CD8-positive, alpha-beta T cell (primary cell): ENCODE measurements at regions of chr10 and their contacts with region 1.

Region 1: DNA sequence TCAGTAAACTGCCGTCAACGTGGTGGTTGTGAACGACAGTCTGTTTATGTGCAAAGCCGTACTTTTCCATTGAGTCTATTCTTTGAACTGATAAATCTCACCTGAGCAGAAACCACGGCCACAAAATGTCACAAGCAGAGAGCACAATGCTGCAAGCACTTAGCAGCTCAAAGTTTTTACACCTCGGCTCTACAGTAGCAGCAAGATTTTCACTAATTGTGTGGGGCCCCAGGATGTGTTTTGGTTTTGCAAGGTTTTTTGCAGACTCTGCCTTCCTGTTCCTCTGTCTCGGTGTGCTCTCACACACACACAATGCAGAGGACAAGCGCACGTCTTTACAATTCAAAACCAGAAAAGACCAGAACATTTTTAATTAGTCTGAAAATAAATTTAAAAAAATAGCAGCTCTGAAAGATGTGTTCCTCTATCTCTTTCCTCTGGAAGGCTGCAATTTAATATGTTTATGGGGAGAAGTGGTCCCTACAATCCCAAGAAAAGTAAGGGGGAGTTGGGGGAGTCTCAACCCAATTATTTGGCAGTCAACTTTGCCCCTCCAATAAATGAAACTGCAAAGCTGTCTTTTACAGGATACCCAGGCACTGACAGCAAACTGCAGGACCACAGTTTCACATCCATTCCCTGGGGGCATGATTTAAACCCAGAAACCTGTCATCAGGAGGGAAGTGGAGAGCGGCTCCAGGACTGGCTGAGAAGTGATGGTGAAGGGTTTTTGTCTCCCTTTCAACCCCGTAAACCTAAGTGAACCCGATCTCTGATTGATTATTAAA is 73.8 kb upstream of the SFMBT2 start:
- DNase-seq: peak; percentile 39 to 92 (median 66)
- ATAC-seq: peak; percentile 79
- H3K4me3 ChIP-seq: peak overlapping the region; percentile 16 to 40
- H3K4me3 Mint-ChIP-seq: peak overlapping the region; percentile 69
- H3K27ac ChIP-seq: peak overlapping the region; percentile 67 to 83
- H3K27ac Mint-ChIP-seq: peak overlapping the region; percentile 94
- H3K4me1 ChIP-seq: peaks cover 80% of the 10 kb centered on the region
- H3K4me1 Mint-ChIP-seq: peaks cover 89% of the 10 kb centered on the region
- H3K27me3 ChIP-seq: no peaks in the 10 kb centered on the region
- H3K27me3 Mint-ChIP-seq: no peaks in the 10 kb centered on the region
- CTCF ChIP-seq: no peak

Region 2: GRCh38 chr10:7362471-7362870 is 122.2 kb before region 1 on chr10:
- CTCF ChIA-PET with region 1: no interaction called
- POLR2A ChIA-PET with region 1: no interaction called
- intact Hi-C with region 1: no loop called
- DNase-seq: no peak
- ATAC-seq: no peak
- H3K4me3 ChIP-seq: no peak overlapping the region
- H3K4me3 Mint-ChIP-seq: no peak overlapping the region
- H3K27ac ChIP-seq: no peak overlapping the region
- H3K27ac Mint-ChIP-seq: no peak overlapping the region
- H3K4me1 ChIP-seq: no peaks in the 10 kb centered on the region
- H3K4me1 Mint-ChIP-seq: peaks cover 38% of the 10 kb centered on the region
- H3K27me3 ChIP-seq: no peaks in the 10 kb centered on the region
- H3K27me3 Mint-ChIP-seq: no peaks in the 10 kb centered on the region
- CTCF ChIP-seq: no peak

Region 3: GRCh38 chr10:7507887-7508726 is 23.5 kb after region 1 on chr10:
- CTCF ChIA-PET with region 1: no interaction called
- POLR2A ChIA-PET with region 1: interaction called, 27 read pairs
- intact Hi-C with region 1: loop called in 1 of 2 experiments (anchors 2 kb)
- DNase-seq: peak in 5 of 9 experiments; percentile 23 to 75 (median 55)
- ATAC-seq: peak; percentile 52
- H3K4me3 ChIP-seq: no peak overlapping the region
- H3K4me3 Mint-ChIP-seq: peak overlapping the region; percentile 42
- H3K27ac ChIP-seq: peak overlapping the region; percentile 29 to 73
- H3K27ac Mint-ChIP-seq: peak overlapping the region; percentile 86
- H3K4me1 ChIP-seq: peaks cover 26% of the 10 kb centered on the region
- H3K4me1 Mint-ChIP-seq: peaks cover 58% of the 10 kb centered on the region
- H3K27me3 ChIP-seq: no peaks in the 10 kb centered on the region
- H3K27me3 Mint-ChIP-seq: no peaks in the 10 kb centered on the region
- CTCF ChIP-seq: no peak